Posterior vena cava (tissue), 2 donors: ENCODE measurements at regions of chr1 and their contacts with region 1.

Region 1: GRCh38 chr1:119327436-119328155 is 41.0 kb upstream of the HAO2 start:
- DNase-seq: no peak

Region 2: GRCh38 chr1:119222271-119222670 is 105.3 kb before region 1 on chr1:
- intact Hi-C with region 1: no loop called
- DNase-seq: no peak

Region 3: GRCh38 chr1:119235120-119235519 is 92.5 kb before region 1 on chr1:
- intact Hi-C with region 1: loop called in 1 of 2 experiments (anchors 5 kb)
- DNase-seq: no peak

Region 4: DNA sequence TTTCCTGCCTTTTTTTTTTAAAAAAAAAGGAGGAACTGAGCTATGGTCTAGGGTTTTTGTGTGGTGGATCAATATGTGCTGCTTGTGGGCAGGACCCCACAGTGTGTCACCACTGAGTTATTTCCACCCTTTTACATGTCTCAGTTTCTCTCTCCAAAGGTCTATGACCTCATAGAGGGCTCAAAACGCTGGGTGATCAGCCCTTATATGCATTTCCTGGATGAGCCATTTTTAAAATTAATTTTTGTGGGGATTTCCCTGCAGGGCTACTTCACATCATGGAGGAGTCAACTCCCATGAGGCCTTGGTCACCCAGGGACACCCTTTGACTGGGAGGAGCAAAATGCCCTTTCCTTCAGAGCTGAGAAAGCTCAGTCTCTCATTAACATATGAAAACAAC is 20.3 kb after region 1 on chr1:
- intact Hi-C with region 1: no loop called
- DNase-seq: no peak